ENCODE measurements at regions of chr3 and their contacts with region 1.

Region 1: GRCh38 chr3:141738022-141738890 is at the start of gene RNF7:
- DNase-seq: peak; percentile 96 to 98
- ATAC-seq: peak; percentile 100
- H3K4me3 ChIP-seq: peak within 1 kb of the TSS; percentile 94
- H3K27ac ChIP-seq: peak within 1 kb of the TSS; percentile 57 to 89
- H3K4me1 ChIP-seq: peaks cover 0 to 2% of the 10 kb centered on the region in 2 donors
- H3K27me3 ChIP-seq: no peaks in the 10 kb centered on the region
- total RNA-seq, gene RNF7: 68.3 to 76.3 TPM

Region 2: GRCh38 chr3:141575879-141576743 is 162.1 kb before region 1 on chr3:
- intact Hi-C with region 1: loop called in 1 of 2 experiments (anchors 5 kb)
- DNase-seq: no peak
- ATAC-seq: no peak
- H3K4me3 ChIP-seq: peak overlapping the region in 1 of 2 donors; percentile 34
- H3K27ac ChIP-seq: no peak overlapping the region
- H3K4me1 ChIP-seq: no peaks in the 10 kb centered on the region
- H3K27me3 ChIP-seq: no peaks in the 10 kb centered on the region

Region 3: GRCh38 chr3:141597931-141598330 is 140.3 kb before region 1 on chr3:
- intact Hi-C with region 1: loop called (anchors 5 to 10 kb)
- DNase-seq: no peak
- ATAC-seq: no peak
- H3K4me3 ChIP-seq: no peak overlapping the region
- H3K27ac ChIP-seq: no peak overlapping the region
- H3K4me1 ChIP-seq: peaks cover 0 to 4% of the 10 kb centered on the region in 2 donors
- H3K27me3 ChIP-seq: no peaks in the 10 kb centered on the region

Region 4: DNA sequence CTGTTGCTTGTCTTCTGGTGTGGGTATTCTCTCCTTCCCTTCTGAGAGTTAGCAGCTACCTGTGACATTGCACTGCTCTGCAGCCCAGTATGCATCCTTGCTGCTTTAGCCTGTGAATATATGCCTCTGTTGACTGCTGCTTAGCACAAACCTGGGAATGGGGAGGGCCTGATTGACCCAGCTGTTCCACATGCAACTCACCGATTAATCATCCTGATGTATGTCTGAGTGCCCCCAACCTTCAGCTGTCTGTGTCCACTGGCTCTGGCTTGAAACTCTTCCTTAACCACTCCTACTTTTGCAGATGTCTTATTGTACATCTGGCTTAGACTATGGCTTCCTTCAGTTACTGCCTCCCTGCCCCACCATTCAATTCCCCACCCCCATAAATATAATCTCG is 132.4 kb before region 1 on chr3:
- intact Hi-C with region 1: loop called in 1 of 2 experiments (anchors 10 kb)
- DNase-seq: no peak
- ATAC-seq: no peak
- H3K4me3 ChIP-seq: no peak overlapping the region
- H3K27ac ChIP-seq: no peak overlapping the region
- H3K4me1 ChIP-seq: peaks cover 0 to 4% of the 10 kb centered on the region in 2 donors
- H3K27me3 ChIP-seq: no peaks in the 10 kb centered on the region

Region 5: GRCh38 chr3:141659821-141660613 is 78.2 kb before region 1 on chr3:
- intact Hi-C with region 1: loop called in 1 of 2 experiments (anchors 2 kb)
- DNase-seq: peak; percentile 79 to 91
- ATAC-seq: peak; percentile 89
- H3K4me3 ChIP-seq: peak overlapping the region; percentile 6 to 62
- H3K27ac ChIP-seq: peak overlapping the region; percentile 2 to 59
- H3K4me1 ChIP-seq: no peaks in the 10 kb centered on the region
- H3K27me3 ChIP-seq: no peaks in the 10 kb centered on the region

Region 6: GRCh38 chr3:141875374-141875892 is 137.2 kb after region 1 on chr3:
- intact Hi-C with region 1: loop called (anchors 1 to 5 kb)
- DNase-seq: peak; percentile 91 to 95
- ATAC-seq: peak; percentile 96
- H3K4me3 ChIP-seq: peak overlapping the region; percentile 73 to 90
- H3K27ac ChIP-seq: peak overlapping the region; percentile 97 to 99
- H3K4me1 ChIP-seq: peaks cover 1 to 8% of the 10 kb centered on the region in 2 donors
- H3K27me3 ChIP-seq: no peaks in the 10 kb centered on the region

Region 7: GRCh38 chr3:141913150-141913811 is 175.0 kb after region 1 on chr3:
- intact Hi-C with region 1: loop called in 1 of 2 experiments (anchors 10 kb)
- DNase-seq: no peak
- ATAC-seq: peak; percentile 60
- H3K4me3 ChIP-seq: no peak overlapping the region
- H3K27ac ChIP-seq: no peak overlapping the region
- H3K4me1 ChIP-seq: no peaks in the 10 kb centered on the region
- H3K27me3 ChIP-seq: no peaks in the 10 kb centered on the region